ENCODE measurements at regions of chr22 and their contacts with region 1.

Region 1: GRCh38 chr22:40950962-40951794 is at the start of gene RBX1:
- DNase-seq: peak; percentile 92 to 99
- H3K4me3 ChIP-seq: peak within 1 kb of the TSS; percentile 78 to 83
- H3K27ac ChIP-seq: peak within 1 kb of the TSS; percentile 95
- H3K4me1 ChIP-seq: peaks cover 3 to 18% of the 10 kb centered on the region in 2 donors
- H3K27me3 ChIP-seq: no peaks in the 10 kb centered on the region
- CTCF ChIP-seq: no peak
- total RNA-seq, gene RBX1: 50.6 TPM

Region 2: GRCh38 chr22:40890881-40891280 is 60.3 kb before region 1 on chr22:
- intact Hi-C with region 1: no loop called
- DNase-seq: no peak
- H3K4me3 ChIP-seq: no peak overlapping the region
- H3K27ac ChIP-seq: no peak overlapping the region
- H3K4me1 ChIP-seq: no peaks in the 10 kb centered on the region
- H3K27me3 ChIP-seq: no peaks in the 10 kb centered on the region
- CTCF ChIP-seq: no peak

Region 3: DNA sequence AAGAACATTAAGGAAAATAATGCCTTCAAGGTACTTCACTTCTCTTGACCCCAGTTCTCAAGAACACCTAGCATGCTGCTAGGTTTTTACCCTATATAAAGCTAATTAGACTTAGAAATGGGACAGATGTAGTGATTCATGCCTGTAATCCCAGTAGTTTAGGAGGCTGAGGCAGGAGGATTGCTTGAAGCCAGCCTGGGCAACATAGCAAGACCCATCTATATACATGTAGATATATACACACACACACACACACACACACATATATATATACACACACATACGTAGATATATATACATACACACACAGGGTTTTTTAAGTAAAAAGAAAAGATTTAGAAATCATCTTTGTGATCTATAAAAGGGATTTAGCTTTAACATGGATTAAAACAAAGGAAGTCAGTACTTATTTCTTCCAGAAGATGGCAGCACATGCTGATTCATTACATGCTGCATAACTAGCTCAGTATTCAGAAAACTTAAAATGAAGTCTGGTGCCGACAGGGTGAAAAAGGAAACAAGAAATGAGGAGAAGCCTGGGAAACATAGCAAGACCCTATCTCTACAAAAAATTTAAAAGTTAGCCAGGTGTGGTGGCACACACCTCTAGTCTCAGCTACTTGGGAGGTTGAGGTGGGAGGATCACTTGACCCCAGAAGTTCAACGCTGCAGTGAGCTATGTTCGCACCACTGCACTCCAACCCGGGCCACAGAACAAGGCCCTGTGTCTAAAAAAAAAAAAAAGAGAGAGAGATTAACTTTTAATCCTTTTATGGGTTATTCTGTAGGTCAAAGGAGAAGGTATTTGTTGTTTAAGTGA is 28.5 kb before region 1 on chr22:
- intact Hi-C with region 1: loop called (anchors 2 kb)
- DNase-seq: no peak
- H3K4me3 ChIP-seq: no peak overlapping the region
- H3K27ac ChIP-seq: no peak overlapping the region
- H3K4me1 ChIP-seq: peaks cover 0 to 5% of the 10 kb centered on the region in 2 donors
- H3K27me3 ChIP-seq: no peaks in the 10 kb centered on the region
- CTCF ChIP-seq: peak; percentile 62 to 78 (median 74)

Region 4: DNA sequence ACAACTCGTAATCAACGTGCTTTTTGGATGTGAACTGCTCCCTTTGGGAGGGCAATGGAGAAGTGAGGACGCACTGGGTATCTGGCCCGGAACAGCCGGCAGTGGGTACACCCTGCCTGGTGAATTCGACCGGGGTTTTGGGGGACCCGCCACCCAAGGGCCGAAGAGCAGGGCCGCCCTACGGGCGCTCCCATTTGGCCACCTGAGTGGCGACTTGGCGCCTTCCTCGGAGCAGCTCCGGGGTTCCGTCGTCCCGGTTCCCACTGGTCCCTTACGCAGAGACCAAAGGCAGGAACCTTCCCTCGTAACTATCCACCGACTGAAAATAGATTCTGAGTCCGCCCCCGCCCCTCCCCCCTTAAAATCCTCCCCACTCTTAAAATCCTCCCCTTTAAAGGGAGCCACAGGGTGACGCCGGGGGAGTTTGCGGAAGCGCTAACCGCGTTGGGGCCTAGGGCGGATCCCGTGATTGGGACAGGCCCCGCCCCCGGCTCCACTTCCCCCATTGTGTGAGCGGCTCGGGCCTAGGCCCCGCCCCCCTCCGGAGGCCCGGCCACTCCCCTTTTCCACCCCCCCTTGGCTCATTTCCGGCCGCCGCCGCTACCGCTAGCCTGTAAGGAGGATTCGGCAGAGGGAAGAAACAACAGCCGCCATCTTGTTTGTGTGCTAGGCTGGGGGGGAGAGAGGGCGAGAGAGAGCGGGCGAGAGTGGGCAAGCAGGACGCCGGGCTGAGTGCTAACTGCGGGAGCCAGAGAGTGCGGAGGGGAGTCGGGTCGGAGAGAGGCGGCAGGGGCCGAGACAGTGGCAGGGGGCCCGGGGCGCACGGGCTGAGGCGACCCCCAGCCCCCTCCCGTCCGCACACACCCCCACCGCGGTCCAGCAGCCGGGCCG is 140.2 kb after region 1 on chr22:
- intact Hi-C with region 1: loop called (anchors 1 kb)
- DNase-seq: peak; percentile 96 to 100
- H3K4me3 ChIP-seq: peak overlapping the region; percentile 84 to 94
- H3K27ac ChIP-seq: peak overlapping the region; percentile 99 to 100
- H3K4me1 ChIP-seq: peaks cover 0 to 4% of the 10 kb centered on the region in 2 donors
- H3K27me3 ChIP-seq: no peaks in the 10 kb centered on the region
- CTCF ChIP-seq: no peak

Region 5: DNA sequence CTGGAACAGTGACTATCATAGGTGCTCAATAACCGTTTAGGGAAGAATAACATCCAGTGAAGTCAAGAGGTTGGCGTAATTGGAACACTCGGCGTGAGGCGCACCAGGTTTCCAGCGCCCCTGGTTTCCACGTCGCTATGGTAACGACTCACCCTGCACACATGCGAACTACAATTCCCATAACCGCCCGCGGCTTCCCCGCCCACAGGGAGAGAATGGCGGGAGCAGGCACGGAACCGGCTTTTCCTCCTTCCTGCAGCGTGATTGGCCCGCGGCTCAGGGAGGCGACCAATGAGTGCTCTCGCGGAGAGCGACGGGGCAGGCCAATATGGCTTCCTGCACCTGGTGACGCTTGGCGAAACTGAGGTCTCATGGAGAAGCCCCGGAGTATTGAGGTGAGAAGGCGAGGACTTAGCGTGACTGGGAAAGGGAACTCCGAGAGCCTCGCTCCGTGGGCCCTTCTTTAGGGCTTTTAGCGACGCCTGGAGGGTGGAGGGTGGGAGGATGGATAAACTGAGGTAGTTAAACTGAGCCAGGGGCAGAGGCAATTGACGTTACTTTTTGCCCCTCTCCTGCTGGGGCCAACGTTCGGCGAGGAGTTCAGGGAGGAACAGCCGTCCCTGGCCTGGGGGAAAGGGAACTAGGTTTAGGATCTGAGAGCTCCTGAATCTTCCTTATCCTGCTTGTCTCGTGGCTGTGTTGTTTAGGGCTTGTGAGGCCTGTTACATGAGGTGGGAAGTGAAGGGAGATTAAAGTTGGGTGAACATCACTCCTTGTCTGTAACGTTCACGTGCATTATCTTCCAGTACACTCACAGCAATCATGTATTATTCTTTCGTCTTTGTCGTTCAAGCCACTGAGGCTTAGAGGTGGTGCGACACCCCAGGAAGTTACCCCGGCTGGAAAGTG is 254.1 kb after region 1 on chr22 and contains the start of gene L3MBTL2:
- intact Hi-C with region 1: loop called (anchors 1 kb)
- DNase-seq: peak; percentile 95 to 99
- H3K4me3 ChIP-seq: peak within 1 kb of the TSS; percentile 63 to 89
- H3K27ac ChIP-seq: peak within 1 kb of the TSS; percentile 72 to 73
- H3K4me1 ChIP-seq: peaks cover 4 to 5% of the 10 kb centered on the region in 2 donors
- H3K27me3 ChIP-seq: no peaks in the 10 kb centered on the region
- CTCF ChIP-seq: no peak
- total RNA-seq, gene L3MBTL2: 33.3 TPM

Region 6: DNA sequence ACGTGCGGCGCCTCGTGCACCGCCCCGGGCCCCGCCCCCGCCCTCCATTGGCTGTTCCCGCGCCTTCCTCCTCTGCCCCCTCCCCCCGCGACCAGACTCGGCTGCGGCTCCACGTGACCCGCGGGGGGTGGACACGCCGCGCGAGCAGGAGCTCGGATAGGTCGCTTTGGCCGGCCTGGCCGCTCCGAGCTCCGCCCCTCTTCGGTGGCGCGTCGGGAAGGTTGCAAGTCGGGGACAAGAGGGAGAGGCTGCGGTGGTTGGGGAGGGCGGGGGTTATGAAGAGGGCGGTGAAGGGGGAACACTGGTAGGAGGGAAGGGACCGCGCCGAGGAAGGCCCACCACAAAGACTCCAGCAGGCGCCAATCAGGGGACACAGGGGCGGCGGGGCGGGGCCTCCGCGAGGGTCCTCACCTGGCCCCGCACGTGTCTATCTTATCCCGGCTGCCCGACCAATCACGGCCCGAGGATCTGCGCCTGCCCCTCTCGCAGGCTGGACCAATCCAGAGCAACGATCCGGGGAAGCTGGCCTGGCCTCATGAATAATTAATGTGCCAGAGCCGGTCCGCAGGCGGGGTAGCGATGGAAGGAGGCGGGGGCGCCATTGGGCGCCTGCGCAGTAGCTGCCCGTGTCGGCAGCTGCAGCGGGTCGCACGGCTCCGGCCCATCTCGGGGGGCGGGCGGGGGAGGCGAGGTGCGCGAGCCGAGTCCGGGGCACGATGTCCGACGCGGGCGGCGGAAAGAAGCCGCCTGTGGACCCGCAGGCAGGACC is 430.3 kb after region 1 on chr22 and contains the start of gene TEF:
- intact Hi-C with region 1: loop called (anchors 5 kb)
- DNase-seq: peak; percentile 97 to 99
- H3K4me3 ChIP-seq: peak within 1 kb of the TSS; percentile 79 to 87
- H3K27ac ChIP-seq: peak within 1 kb of the TSS; percentile 93 to 96
- H3K4me1 ChIP-seq: peaks cover 3 to 19% of the 10 kb centered on the region in 2 donors
- H3K27me3 ChIP-seq: no peaks in the 10 kb centered on the region
- CTCF ChIP-seq: no peak
- total RNA-seq, gene TEF: 20.2 TPM

Region 7: GRCh38 chr22:41474872-41475459 is 523.8 kb after region 1 on chr22:
- intact Hi-C with region 1: no loop called
- DNase-seq: no peak
- H3K4me3 ChIP-seq: no peak overlapping the region
- H3K27ac ChIP-seq: no peak overlapping the region
- H3K4me1 ChIP-seq: peaks cover 0 to 13% of the 10 kb centered on the region in 2 donors
- H3K27me3 ChIP-seq: no peaks in the 10 kb centered on the region
- CTCF ChIP-seq: no peak

Measured in ascending aorta (tissue), 2 donors.